Naive thymus-derived CD4-positive, alpha-beta T cell (primary cell): ENCODE measurements at regions of chr20 and their contacts with region 1.

Region 1: DNA sequence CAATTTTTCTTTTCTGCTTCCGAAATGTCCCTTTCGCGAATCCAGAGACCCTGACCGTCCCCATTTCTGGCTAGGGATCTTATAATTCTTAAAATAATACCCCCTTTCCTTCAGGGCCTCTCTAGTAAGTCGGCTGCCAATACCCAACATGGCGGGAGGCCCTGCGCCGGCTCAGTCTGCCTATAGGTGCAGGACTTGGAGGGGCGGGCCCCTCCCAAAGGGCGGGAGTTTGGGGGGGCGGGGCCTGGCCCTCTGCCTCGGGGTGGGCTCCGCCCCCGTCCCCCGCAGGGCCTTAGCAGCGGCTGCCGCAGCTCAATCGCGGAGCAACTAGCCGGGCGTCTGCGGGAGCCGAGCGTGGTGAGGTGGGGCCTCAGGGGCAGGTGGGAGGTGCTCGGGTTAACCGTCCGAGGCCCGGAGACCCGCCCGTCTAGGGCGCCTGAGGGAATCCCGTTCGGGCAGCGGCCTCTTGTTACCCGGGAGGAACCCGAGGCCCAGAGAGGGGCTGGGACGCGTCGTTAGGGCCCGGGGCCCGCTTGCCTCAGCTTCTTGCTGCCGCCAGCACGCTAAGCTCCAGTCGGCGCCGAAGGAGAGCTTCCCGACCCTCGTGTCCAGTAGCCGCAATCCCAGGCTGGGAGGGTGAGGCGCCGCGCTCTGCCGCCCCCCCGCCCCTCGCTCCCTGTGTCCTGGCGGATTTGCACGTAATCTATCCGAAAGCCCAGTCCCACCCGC is at the start of gene CEP250:
- DNase-seq: peak; percentile 89 to 97 (median 96)
- ATAC-seq: peak; percentile 99
- H3K4me3 ChIP-seq: peak within 1 kb of the TSS; percentile 94
- H3K4me3 Mint-ChIP-seq: peak within 1 kb of the TSS; percentile 82 to 98 (median 93)
- H3K27ac ChIP-seq: peak within 1 kb of the TSS; percentile 94
- H3K27ac Mint-ChIP-seq: peak within 1 kb of the TSS; percentile 86 to 99 (median 98)
- H3K4me1 ChIP-seq: no peaks in the 10 kb centered on the region
- H3K4me1 Mint-ChIP-seq: peaks cover 0 to 38% (median 23%) of the 10 kb centered on the region in 7 donors
- H3K27me3 ChIP-seq: no peaks in the 10 kb centered on the region
- H3K27me3 Mint-ChIP-seq: no peaks in the 10 kb centered on the region
- total RNA-seq, gene CEP250: 34.5 to 75.0 (median 70.7) TPM

Region 2: DNA sequence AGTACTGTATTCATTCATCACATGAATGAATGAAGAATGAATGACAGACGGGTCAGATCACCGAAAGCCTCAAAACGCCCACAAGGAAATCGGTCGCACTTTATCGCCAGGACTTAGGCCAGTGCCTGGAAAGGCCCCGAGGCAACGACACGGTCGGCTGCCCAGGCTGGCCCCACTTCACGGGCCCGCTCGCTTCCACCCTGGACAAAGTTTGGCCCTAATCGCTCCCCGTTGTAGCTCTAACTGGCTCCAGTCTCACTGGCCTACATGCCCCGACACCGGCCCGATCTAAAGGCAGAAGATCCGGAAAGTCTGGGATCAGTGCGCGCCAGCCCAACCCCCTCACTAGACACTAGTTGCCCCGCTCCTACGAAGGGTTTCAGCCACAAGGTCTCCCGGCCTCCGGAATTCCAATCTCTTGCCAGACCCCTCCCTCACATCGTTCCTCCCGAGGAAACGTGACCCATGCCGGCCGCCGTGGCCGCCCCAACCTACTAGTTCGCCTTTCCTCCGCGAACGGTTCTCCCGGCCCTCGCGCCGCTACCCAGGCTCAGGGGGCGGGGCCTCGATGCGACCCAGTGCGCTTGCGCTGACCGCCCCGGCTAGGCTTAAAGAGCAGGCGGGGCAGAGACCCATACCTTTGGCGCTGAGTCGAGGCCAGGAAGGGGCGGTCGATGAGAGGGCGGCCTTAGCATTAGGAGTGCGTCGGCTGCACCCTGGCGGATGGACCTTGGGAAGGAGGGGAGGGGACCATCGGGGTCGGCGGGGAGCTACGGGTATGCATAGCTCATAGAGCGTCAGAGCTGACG is 499.6 kb before region 1 on chr20 and contains the starts of genes GSS and MYH7B:
- CTCF ChIA-PET with region 1: no interaction called
- POLR2A ChIA-PET with region 1: no interaction called
- intact Hi-C with region 1: loop called in 1 of 2 experiments (anchors 1 kb)
- DNase-seq: peak; percentile 90 to 100 (median 94)
- ATAC-seq: peak; percentile 97
- H3K4me3 ChIP-seq: peak within 1 kb of the TSS; percentile 87
- H3K4me3 Mint-ChIP-seq: peak within 1 kb of the TSS; percentile 95 to 100 (median 98)
- H3K27ac ChIP-seq: peak within 1 kb of the TSS; percentile 77
- H3K27ac Mint-ChIP-seq: peak within 1 kb of the TSS; percentile 94 to 98 (median 97)
- H3K4me1 ChIP-seq: peaks cover 5 to 11% of the 10 kb centered on the region in 2 donors
- H3K4me1 Mint-ChIP-seq: peaks cover 11 to 40% (median 34%) of the 10 kb centered on the region in 7 donors
- H3K27me3 ChIP-seq: no peaks in the 10 kb centered on the region
- H3K27me3 Mint-ChIP-seq: no peaks in the 10 kb centered on the region
- total RNA-seq, gene GSS: 25.9 to 54.4 (median 45.8) TPM
- total RNA-seq, gene MYH7B: 0.15 to 1.0 (median 0.44) TPM

Region 3: GRCh38 chr20:35410613-35411012 is 44.4 kb before region 1 on chr20:
- CTCF ChIA-PET with region 1: no interaction called
- POLR2A ChIA-PET with region 1: no interaction called
- intact Hi-C with region 1: loop called in 1 of 2 experiments (anchors 1 kb)
- DNase-seq: no peak
- ATAC-seq: no peak
- H3K4me3 ChIP-seq: peak overlapping the region; percentile 79
- H3K4me3 Mint-ChIP-seq: peak overlapping the region; percentile 92 to 100 (median 98)
- H3K27ac ChIP-seq: no peak overlapping the region
- H3K27ac Mint-ChIP-seq: peak overlapping the region in 8 of 9 donors; percentile 48 to 100 (median 97)
- H3K4me1 ChIP-seq: peaks cover 8 to 9% of the 10 kb centered on the region in 2 donors
- H3K4me1 Mint-ChIP-seq: peaks cover 17 to 24% (median 22%) of the 10 kb centered on the region in 7 donors
- H3K27me3 ChIP-seq: no peaks in the 10 kb centered on the region
- H3K27me3 Mint-ChIP-seq: peaks cover 0 to 2% (median 0%) of the 10 kb centered on the region in 5 donors

Region 4: GRCh38 chr20:35664544-35665221 is 209.6 kb after region 1 on chr20 and contains the starts of genes CPNE1 and RBM12:
- CTCF ChIA-PET with region 1: no interaction called
- POLR2A ChIA-PET with region 1: interaction called, 16 read pairs
- intact Hi-C with region 1: loop called (anchors 2 to 5 kb)
- DNase-seq: peak; percentile 89 to 96 (median 96)
- ATAC-seq: peak; percentile 89
- H3K4me3 ChIP-seq: peak within 1 kb of the TSS; percentile 88
- H3K4me3 Mint-ChIP-seq: peak within 1 kb of the TSS; percentile 89 to 98 (median 96)
- H3K27ac ChIP-seq: peak within 1 kb of the TSS; percentile 100
- H3K27ac Mint-ChIP-seq: peak within 1 kb of the TSS; percentile 98 to 100 (median 99)
- H3K4me1 ChIP-seq: peaks cover 35 to 38% of the 10 kb centered on the region in 2 donors
- H3K4me1 Mint-ChIP-seq: peaks cover 32 to 49% (median 47%) of the 10 kb centered on the region in 7 donors
- H3K27me3 ChIP-seq: no peaks in the 10 kb centered on the region
- H3K27me3 Mint-ChIP-seq: no peaks in the 10 kb centered on the region
- total RNA-seq, gene CPNE1: 250 to 378 (median 305) TPM
- total RNA-seq, gene RBM12: 98.2 to 122 (median 114) TPM

Region 5: GRCh38 chr20:35771689-35772562 is 316.9 kb after region 1 on chr20 and contains the start of gene PHF20:
- CTCF ChIA-PET with region 1: no interaction called
- POLR2A ChIA-PET with region 1: no interaction called
- intact Hi-C with region 1: loop called in 1 of 2 experiments (anchors 1 kb)
- DNase-seq: peak; percentile 98 to 100 (median 99)
- ATAC-seq: peak; percentile 90
- H3K4me3 ChIP-seq: peak within 1 kb of the TSS; percentile 59
- H3K4me3 Mint-ChIP-seq: peak within 1 kb of the TSS; percentile 84 to 97 (median 94)
- H3K27ac ChIP-seq: peak within 1 kb of the TSS; percentile 98
- H3K27ac Mint-ChIP-seq: peak within 1 kb of the TSS; percentile 96 to 100 (median 100)
- H3K4me1 ChIP-seq: peaks cover 76 to 78% of the 10 kb centered on the region in 2 donors
- H3K4me1 Mint-ChIP-seq: peaks cover 52 to 88% (median 74%) of the 10 kb centered on the region in 7 donors
- H3K27me3 ChIP-seq: no peaks in the 10 kb centered on the region
- H3K27me3 Mint-ChIP-seq: no peaks in the 10 kb centered on the region
- total RNA-seq, gene PHF20: 57.5 to 157 (median 78.0) TPM